ENCODE measurements at regions of chr10 and their contacts with region 1.

Region 1: GRCh38 chr10:87861953-87862678 is 1.2 kb downstream of the KLLN start:
- DNase-seq: peak; percentile 93
- H3K4me3 Mint-ChIP-seq: peak overlapping the region; percentile 98
- H3K27ac Mint-ChIP-seq: peak overlapping the region; percentile 96
- H3K4me1 Mint-ChIP-seq: peaks cover 28% of the 10 kb centered on the region
- H3K27me3 Mint-ChIP-seq: no peaks in the 10 kb centered on the region

Region 2: GRCh38 chr10:87094373-87095235 is 767.5 kb before region 1 on chr10 and contains the starts of genes GLUD1 and SHLD2:
- intact Hi-C with region 1: loop called (anchors 2 kb)
- DNase-seq: peak; percentile 90
- H3K4me3 Mint-ChIP-seq: peak within 1 kb of the TSS; percentile 95
- H3K27ac Mint-ChIP-seq: peak within 1 kb of the TSS; percentile 96
- H3K4me1 Mint-ChIP-seq: peaks cover 45% of the 10 kb centered on the region
- H3K27me3 Mint-ChIP-seq: no peaks in the 10 kb centered on the region
- total RNA-seq, gene GLUD1: 105 and 109 TPM in 2 replicates
- total RNA-seq, gene SHLD2: 39.9 and 41.7 TPM in 2 replicates

Region 3: GRCh38 chr10:87503886-87504285 is 358.2 kb before region 1 on chr10:
- intact Hi-C with region 1: no loop called
- DNase-seq: no peak
- H3K4me3 Mint-ChIP-seq: peak overlapping the region; percentile 83
- H3K27ac Mint-ChIP-seq: peak overlapping the region; percentile 80
- H3K4me1 Mint-ChIP-seq: peaks cover 27% of the 10 kb centered on the region
- H3K27me3 Mint-ChIP-seq: peaks cover 15% of the 10 kb centered on the region

Region 4: DNA sequence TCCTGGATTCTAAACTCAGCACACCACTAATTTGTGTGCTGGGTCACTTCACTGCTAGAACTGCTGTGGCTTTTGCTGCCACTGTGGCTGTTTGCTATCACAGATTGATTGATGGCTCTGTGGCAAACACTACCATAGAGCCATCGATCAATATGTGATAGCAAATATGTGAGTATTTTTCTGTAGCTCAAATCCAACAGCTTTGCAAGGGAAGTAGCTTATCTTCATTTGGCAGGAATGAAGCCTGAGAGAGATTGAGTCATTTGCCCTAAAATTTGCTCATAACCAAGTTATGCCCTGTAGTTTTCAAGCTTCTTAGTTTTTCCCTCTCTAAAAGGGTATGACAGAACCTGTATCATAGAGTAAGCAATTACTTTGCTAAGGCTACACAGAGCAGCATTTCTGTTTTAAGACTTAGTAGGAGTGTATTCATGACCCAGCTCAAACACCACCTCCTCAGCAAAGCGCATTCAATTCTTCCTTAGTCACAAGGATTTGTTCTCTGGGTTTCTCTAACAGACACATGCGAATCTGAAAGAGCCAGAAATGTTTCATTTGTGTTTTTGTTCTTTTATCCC is 314.3 kb before region 1 on chr10:
- intact Hi-C with region 1: no loop called
- DNase-seq: no peak
- H3K4me3 Mint-ChIP-seq: no peak overlapping the region
- H3K27ac Mint-ChIP-seq: no peak overlapping the region
- H3K4me1 Mint-ChIP-seq: peaks cover 11% of the 10 kb centered on the region
- H3K27me3 Mint-ChIP-seq: peaks cover 1% of the 10 kb centered on the region

Region 5: DNA sequence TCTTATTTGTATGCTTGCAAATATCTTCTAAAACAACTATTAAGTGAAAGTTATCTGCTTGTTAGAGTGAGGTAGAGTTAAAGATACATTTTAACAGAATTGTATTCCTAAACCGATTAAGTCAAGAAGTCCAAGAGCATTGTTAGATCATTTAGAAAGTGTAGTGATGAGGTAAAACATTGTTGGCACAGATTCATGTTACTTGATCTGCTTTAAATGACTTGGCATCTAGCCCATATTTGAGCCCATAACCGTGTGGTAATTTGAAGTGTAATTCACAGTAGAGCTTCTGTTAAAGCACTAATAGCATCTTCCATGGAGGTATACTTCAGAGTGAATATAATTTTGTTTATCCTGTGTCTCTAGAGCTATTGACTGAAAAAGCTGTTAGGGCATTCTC is 63.5 kb after region 1 on chr10:
- intact Hi-C with region 1: loop called (anchors 5 kb)
- DNase-seq: no peak
- H3K4me3 Mint-ChIP-seq: no peak overlapping the region
- H3K27ac Mint-ChIP-seq: no peak overlapping the region
- H3K4me1 Mint-ChIP-seq: peaks cover 48% of the 10 kb centered on the region
- H3K27me3 Mint-ChIP-seq: no peaks in the 10 kb centered on the region

Region 6: GRCh38 chr10:88114368-88114767 is 252.3 kb after region 1 on chr10:
- intact Hi-C with region 1: loop called (anchors 1 kb)
- DNase-seq: no peak
- H3K4me3 Mint-ChIP-seq: no peak overlapping the region
- H3K27ac Mint-ChIP-seq: no peak overlapping the region
- H3K4me1 Mint-ChIP-seq: peaks cover 32% of the 10 kb centered on the region
- H3K27me3 Mint-ChIP-seq: peaks cover 7% of the 10 kb centered on the region

Region 7: DNA sequence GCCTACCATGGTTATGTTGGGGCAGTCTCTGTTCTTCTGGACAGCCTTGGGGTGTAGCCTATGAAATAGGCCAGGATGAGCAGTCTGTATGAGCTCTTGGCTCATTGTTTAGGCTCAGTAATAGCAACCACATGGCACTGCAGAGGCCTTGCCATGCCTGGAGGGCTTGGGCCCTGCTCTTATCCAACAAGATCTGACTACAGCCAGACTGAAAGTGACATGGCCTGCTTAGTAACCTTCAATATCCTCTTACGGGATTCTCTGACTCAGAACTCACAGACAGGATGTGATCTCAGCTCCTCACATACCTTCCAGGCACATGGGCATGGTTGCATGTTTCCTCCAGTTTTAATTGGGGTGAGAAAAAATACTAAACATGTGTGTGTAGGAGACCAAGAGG is 290.6 kb after region 1 on chr10:
- intact Hi-C with region 1: loop called (anchors 5 kb)
- DNase-seq: peak; percentile 39
- H3K4me3 Mint-ChIP-seq: no peak overlapping the region
- H3K27ac Mint-ChIP-seq: peak overlapping the region; percentile 89
- H3K4me1 Mint-ChIP-seq: peaks cover 40% of the 10 kb centered on the region
- H3K27me3 Mint-ChIP-seq: peaks cover 7% of the 10 kb centered on the region

Region 8: DNA sequence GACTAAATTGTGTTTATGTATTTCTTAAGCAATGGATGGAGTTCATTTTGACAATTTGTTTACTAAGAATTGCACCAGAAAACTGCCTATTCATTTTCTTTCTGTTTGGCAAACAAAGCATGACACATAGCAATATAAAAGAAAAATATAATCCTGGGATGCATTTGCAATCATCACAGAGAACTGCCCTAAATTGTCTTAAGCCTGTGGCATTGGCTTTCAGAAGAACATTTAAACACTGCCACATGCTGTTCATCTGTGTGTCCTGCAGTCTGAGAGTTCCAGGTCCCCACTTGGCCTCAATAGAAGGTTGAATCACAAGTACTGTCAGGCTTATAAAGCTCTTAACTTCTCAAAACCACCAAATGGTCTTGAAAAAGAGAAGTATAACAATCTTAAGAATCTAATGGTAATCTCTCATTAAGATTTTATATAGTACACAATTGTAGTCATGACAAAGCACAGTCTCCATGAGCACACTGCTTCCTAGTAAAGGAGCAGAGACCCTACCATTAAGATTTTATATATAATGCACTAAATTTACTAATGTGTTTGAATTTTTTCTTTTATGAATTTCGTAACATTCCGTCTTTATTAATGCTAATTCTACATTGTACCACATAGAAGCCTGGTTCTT is 691.1 kb after region 1 on chr10:
- intact Hi-C with region 1: loop called (anchors 2 kb)
- DNase-seq: peak; percentile 16
- H3K4me3 Mint-ChIP-seq: no peak overlapping the region
- H3K27ac Mint-ChIP-seq: no peak overlapping the region
- H3K4me1 Mint-ChIP-seq: peaks cover 8% of the 10 kb centered on the region
- H3K27me3 Mint-ChIP-seq: peaks cover 6% of the 10 kb centered on the region